ENCODE measurements at regions of chr13 and their contacts with region 1.

Region 1: DNA sequence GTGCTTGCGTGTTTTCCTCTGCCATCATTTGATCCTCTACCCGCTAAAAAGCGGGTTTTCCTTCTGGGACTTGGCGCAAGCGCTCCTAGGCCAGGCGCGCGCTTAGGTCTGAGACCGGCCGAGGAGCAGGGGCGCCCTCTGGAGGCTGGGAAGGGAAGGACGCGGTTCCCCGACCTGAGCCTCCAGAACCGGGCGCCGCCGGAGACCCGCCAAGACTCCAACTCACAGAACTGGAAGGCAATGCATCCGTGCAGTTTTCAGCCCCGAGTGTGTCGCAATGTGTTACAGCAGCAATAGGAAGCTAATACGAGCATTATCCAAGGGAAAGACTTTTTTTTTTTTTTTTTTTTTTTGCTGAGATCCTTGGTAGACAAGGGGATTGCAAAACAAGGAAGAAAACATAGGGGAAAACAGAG is 190.9 kb downstream of the COL4A1 start:
- DNase-seq: no peak
- H3K4me3 ChIP-seq: no peak overlapping the region
- CTCF ChIP-seq: peak; percentile 97

Region 2: DNA sequence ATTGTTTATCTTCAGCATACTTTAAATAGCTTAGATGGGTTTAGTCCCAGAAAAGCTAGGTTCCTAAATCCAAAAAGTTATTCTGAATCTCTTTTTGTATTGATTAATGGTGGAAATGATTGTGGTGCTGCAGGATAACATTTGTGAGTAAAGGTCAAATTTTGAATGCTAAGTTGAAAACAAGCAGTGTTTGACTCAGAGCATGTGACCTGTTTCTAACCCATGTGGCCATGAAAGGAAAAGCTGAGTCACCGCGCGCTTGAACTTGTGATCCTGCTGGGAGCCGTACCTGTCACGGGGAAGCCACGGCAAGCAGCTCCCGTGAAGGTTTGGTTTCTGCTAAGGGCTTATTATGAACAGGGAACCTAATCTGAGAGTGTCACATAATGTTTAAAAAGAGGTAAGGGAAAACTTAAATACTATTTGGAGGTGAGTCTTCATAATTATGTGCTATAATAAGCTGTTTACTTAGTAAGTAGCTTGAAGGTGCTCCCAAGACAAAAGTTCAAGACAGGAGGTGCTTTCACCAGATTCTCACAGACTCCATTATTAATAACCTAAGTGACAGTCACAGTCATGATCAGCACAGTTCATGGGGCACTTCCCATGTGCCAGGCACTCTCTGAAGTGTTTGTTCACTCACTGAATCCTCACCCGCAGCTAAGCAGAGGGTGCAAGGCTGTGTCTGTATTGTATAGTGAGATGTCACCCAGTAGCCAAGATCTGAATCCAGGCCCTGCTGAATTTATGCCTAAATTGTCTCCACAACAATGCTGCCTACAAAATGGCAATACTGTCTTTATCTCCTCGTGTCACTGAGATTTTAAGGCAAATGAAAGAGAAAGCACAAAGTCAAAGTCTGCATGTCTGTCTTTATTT is 1200.2 kb before region 1 on chr13:
- CTCF ChIA-PET with region 1: interaction called, 20 read pairs
- POLR2A ChIA-PET with region 1: no interaction called
- DNase-seq: no peak
- H3K4me3 ChIP-seq: no peak overlapping the region
- CTCF ChIP-seq: no peak

Region 3: GRCh38 chr13:108961542-108962125 is 1154.4 kb before region 1 on chr13:
- CTCF ChIA-PET with region 1: interaction called, 28 read pairs
- POLR2A ChIA-PET with region 1: no interaction called
- DNase-seq: no peak
- H3K4me3 ChIP-seq: no peak overlapping the region
- CTCF ChIP-seq: peak; percentile 51

Region 4: GRCh38 chr13:109779074-109779473 is 337.0 kb before region 1 on chr13:
- CTCF ChIA-PET with region 1: interaction called, 18 read pairs
- POLR2A ChIA-PET with region 1: no interaction called
- DNase-seq: no peak
- H3K4me3 ChIP-seq: no peak overlapping the region
- CTCF ChIP-seq: no peak

Region 5: GRCh38 chr13:109784221-109784894 is 331.7 kb before region 1 on chr13:
- CTCF ChIA-PET with region 1: interaction called, 25 read pairs
- POLR2A ChIA-PET with region 1: no interaction called
- DNase-seq: no peak
- H3K4me3 ChIP-seq: peak overlapping the region; percentile 64
- CTCF ChIP-seq: peak; percentile 74

Region 6: DNA sequence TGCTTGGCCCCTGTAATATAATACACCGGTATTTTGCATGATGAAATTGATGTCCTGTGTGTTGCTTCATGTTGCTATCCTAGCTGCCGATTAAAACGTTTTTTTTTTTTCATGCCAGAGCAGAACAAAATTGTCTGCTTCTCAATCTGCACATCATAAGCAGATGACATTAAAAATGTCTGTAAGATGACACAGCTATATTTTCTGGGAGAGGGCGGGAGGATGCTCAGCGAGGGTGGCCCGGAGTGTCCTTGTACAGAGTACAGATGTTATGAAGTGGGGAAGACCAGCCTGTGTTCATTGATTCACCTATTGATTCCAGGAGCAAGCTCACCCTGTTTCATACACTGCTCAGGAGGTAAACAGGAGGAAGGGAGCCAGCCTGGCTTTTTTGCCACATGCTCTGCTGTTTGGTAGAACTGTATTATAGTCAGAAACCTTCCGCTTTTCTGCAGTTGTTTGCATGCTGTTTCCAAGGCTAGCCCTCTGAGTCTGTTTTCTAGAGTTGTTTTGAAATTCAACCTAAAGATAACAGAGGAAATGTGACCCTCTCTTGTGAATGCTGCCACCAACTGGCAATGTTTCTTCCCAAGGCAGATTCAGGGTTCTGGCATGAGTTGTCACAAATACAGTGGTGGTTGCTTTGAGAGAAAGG is 325.0 kb before region 1 on chr13:
- CTCF ChIA-PET with region 1: interaction called, 25 read pairs
- POLR2A ChIA-PET with region 1: no interaction called
- DNase-seq: no peak
- H3K4me3 ChIP-seq: no peak overlapping the region
- CTCF ChIP-seq: peak; percentile 42

Region 7: GRCh38 chr13:110126391-110126961 is 10.4 kb after region 1 on chr13:
- CTCF ChIA-PET with region 1: interaction called, 40 read pairs
- POLR2A ChIA-PET with region 1: no interaction called
- DNase-seq: peak; percentile 93
- H3K4me3 ChIP-seq: peak overlapping the region; percentile 40
- CTCF ChIP-seq: no peak

Region 8: DNA sequence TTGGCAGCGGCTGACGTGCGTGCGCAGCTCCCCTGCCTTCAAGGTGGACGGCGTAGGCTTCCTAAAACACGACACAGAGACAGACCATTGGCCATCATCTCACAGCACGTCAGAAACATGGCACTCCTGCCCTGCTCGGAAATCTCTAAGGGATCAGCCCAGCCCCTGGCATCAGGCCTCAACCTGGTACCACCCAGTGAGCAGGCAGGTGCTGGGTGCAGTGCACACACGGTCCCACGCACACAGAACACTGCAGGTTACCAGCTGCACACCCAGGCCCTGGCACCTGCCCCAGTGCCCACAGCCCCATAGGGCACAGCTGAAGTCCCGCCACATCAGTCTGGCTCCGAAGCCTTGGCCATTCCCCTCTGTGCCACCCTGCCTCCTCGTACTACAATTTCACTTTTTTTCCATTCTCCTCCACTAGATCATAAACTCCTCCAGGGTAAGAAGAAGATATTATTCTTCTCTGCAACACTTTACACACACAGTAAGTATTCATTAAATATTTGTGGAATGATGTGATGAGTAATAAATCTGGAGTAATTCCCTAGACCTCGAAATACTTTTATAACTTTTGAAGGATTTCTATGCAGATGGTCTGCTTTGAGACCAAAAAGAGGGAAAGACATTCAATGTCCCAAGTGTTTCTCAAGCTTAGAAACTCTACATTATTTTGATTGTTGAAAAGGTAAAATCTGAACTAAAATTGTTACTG is 34.5 kb after region 1 on chr13:
- CTCF ChIA-PET with region 1: no interaction called
- POLR2A ChIA-PET with region 1: no interaction called
- DNase-seq: no peak
- H3K4me3 ChIP-seq: no peak overlapping the region
- CTCF ChIP-seq: no peak

Measured in AG04449 (cell line).